B cell (primary cell): ENCODE measurements at regions of chr2 and their contacts with region 1.

Region 1: DNA sequence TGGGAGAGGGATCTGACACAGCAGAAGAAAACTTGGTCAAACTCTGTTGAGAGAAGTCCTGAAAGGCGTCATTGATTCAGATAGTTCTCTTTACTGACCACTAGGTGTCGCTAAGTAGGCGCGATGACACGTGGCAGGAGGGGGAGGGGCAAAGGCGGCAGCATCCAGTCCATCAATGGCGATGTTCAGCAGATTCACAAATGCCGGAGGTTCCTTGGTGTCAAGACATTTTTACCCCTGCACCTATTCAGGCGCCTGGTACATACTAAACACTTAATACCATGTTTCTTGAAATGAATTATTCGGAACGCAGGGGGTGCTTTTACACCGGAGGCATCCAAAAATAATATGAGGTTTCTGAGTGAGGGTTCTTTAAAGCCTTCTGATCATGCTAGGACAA is 3.0 kb upstream of the PLEK start:
- DNase-seq: peak; percentile 91
- ATAC-seq: peak; percentile 74
- H3K4me3 ChIP-seq: peak overlapping the region; percentile 14 to 68 (median 42)
- H3K4me3 Mint-ChIP-seq: peak overlapping the region; percentile 97
- H3K27ac ChIP-seq: peak overlapping the region; percentile 89 to 91
- H3K27ac Mint-ChIP-seq: peak overlapping the region; percentile 97
- H3K4me1 ChIP-seq: peaks cover 34 to 46% of the 10 kb centered on the region in 2 donors
- H3K4me1 Mint-ChIP-seq: peaks cover 54% of the 10 kb centered on the region
- H3K27me3 ChIP-seq: no peaks in the 10 kb centered on the region
- H3K27me3 Mint-ChIP-seq: no peaks in the 10 kb centered on the region
- CTCF ChIP-seq: peak; percentile 84

Region 2: DNA sequence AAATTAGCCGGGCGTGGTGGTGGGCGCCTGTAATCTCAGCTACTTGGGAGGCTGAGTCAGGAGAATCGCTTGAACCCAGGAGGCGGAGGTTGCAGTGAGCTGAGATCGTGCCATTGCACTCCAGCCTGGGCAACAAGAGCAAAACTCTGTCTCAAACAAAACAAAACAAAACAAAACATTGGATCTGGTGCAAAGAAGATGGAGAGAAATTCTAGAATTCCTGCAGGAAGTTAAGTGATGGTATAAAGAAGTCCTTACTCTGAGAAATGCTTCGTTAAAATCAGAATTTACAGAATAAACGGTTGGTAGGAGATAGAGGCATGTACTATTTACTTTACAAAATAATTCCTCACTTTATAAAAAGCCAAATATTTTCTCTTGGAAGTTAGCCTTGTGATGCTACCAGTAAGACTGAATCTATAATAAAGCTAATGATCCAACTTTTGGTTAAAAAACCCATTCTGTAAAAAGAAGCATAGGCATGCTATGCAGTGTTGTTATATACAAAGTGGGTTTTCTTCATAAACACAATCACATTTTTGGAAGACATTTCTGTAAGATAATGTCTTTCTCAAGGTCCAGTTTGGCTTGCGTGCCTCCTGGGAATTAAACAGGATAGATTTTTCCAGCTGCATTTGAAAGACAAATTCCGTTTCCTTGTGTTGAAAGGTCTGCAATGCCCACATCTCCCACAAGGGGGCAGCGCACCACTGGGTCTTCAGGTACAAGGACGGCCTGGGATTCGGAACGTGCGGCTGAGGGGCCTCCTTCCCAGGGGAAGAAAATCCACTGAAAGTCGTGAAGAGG is 240.0 kb before region 1 on chr2:
- CTCF ChIA-PET with region 1: interaction called, 3 read pairs
- POLR2A ChIA-PET with region 1: no interaction called
- intact Hi-C with region 1: loop called (anchors 1 kb)
- DNase-seq: peak; percentile 81
- ATAC-seq: peak; percentile 34
- H3K4me3 ChIP-seq: peak overlapping the region in 1 of 5 experiments; percentile 34
- H3K4me3 Mint-ChIP-seq: peak overlapping the region; percentile 50
- H3K27ac ChIP-seq: peak overlapping the region in 1 of 2 donors; percentile 88
- H3K27ac Mint-ChIP-seq: peak overlapping the region; percentile 99
- H3K4me1 ChIP-seq: peaks cover 27 to 46% of the 10 kb centered on the region in 2 donors
- H3K4me1 Mint-ChIP-seq: peaks cover 42% of the 10 kb centered on the region
- H3K27me3 ChIP-seq: no peaks in the 10 kb centered on the region
- H3K27me3 Mint-ChIP-seq: no peaks in the 10 kb centered on the region
- CTCF ChIP-seq: peak; percentile 95

Region 3: DNA sequence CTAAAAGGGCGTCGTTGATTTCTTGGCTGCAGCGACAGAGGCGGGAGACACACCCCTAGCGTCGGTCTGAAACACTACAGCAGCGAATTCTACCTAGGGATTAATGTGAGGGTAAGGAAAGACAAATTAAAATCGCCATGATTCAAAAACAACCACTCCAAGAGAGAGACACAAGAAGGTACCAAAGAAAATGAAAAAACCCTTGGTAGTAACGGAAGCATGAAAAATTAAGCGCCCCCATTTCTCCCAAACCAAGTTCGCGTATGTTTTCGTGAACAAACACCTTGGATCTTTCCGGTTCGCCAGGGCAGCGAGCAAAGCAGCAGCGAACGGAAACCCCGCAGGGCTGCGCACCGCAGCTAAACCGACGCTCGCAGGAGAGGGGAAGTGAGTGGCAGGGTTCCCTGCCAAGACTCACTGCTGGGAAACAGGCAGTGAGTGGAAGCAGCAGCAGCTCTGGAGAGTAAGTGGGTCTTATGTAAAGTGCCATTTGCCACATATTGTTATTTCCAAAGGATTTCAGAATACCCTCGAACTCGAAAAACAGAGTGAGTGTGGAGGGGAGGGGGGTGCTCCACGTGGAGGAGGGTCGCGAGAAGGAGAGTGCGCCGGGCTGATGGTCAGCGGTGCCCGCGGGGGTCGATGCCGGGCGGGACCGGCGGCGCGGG is 110.7 kb before region 1 on chr2:
- CTCF ChIA-PET with region 1: interaction called, 3 read pairs
- POLR2A ChIA-PET with region 1: no interaction called
- intact Hi-C with region 1: loop called (anchors 1 kb)
- DNase-seq: peak; percentile 92
- ATAC-seq: peak; percentile 60
- H3K4me3 ChIP-seq: peak overlapping the region; percentile 76 to 97 (median 96)
- H3K4me3 Mint-ChIP-seq: peak overlapping the region; percentile 90
- H3K27ac ChIP-seq: peak overlapping the region; percentile 86 to 92
- H3K27ac Mint-ChIP-seq: peak overlapping the region; percentile 93
- H3K4me1 ChIP-seq: peaks cover 39 to 55% of the 10 kb centered on the region in 2 donors
- H3K4me1 Mint-ChIP-seq: peaks cover 36% of the 10 kb centered on the region
- H3K27me3 ChIP-seq: no peaks in the 10 kb centered on the region
- H3K27me3 Mint-ChIP-seq: no peaks in the 10 kb centered on the region
- CTCF ChIP-seq: peak; percentile 77

Region 4: GRCh38 chr2:68385220-68385906 is 23.3 kb after region 1 on chr2:
- CTCF ChIA-PET with region 1: interaction called, 10 read pairs
- POLR2A ChIA-PET with region 1: interaction called, 8 read pairs
- intact Hi-C with region 1: loop called (anchors 1 kb)
- DNase-seq: peak; percentile 81
- ATAC-seq: peak; percentile 73
- H3K4me3 ChIP-seq: no peak overlapping the region
- H3K4me3 Mint-ChIP-seq: peak overlapping the region; percentile 58
- H3K27ac ChIP-seq: peak overlapping the region; percentile 95 to 98
- H3K27ac Mint-ChIP-seq: peak overlapping the region; percentile 92
- H3K4me1 ChIP-seq: peaks cover 75 to 84% of the 10 kb centered on the region in 2 donors
- H3K4me1 Mint-ChIP-seq: peaks cover 88% of the 10 kb centered on the region
- H3K27me3 ChIP-seq: no peaks in the 10 kb centered on the region
- H3K27me3 Mint-ChIP-seq: no peaks in the 10 kb centered on the region
- CTCF ChIP-seq: no peak

Region 5: DNA sequence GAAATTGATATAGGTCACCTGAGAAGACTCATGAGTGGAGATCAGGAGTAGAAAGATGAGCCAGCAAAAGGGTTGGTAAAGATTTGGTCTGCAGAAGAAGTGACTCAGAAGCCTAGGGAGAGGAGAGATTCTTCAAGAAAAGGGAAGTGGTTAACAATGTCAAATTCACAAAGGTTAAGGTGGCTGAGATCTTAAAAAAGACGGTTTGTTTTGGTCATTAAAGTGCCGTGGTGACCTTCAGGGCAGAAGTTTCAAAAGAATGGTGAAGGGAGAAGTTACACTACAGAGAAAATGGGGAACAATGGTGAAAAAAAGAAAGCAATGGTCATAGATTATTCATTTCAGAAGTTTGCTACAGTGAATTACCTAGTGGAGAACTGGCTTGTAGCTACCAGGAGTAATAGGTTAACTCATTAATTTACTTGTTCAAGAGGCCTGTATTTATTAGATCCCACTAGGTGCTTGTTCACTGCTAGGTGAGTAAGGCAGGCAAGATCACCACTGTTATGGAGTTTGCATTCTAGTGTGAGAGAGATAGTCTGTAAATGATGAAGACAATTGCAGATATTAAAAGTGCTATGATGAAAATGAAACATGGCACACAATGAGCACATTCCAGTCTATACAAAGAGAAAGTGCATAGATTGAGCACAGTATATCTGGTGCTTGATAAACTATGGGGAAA is 62.0 kb after region 1 on chr2:
- CTCF ChIA-PET with region 1: interaction called, 7 read pairs
- POLR2A ChIA-PET with region 1: interaction called, 4 read pairs
- intact Hi-C with region 1: loop called (anchors 1 kb)
- DNase-seq: peak; percentile 74
- ATAC-seq: peak; percentile 81
- H3K4me3 ChIP-seq: peak overlapping the region in 2 of 5 experiments; percentile 3 to 29
- H3K4me3 Mint-ChIP-seq: no peak overlapping the region
- H3K27ac ChIP-seq: peak overlapping the region; percentile 37 to 54
- H3K27ac Mint-ChIP-seq: no peak overlapping the region
- H3K4me1 ChIP-seq: peaks cover 78 to 82% of the 10 kb centered on the region in 2 donors
- H3K4me1 Mint-ChIP-seq: peaks cover 57% of the 10 kb centered on the region
- H3K27me3 ChIP-seq: no peaks in the 10 kb centered on the region
- H3K27me3 Mint-ChIP-seq: no peaks in the 10 kb centered on the region
- CTCF ChIP-seq: no peak

Region 6: DNA sequence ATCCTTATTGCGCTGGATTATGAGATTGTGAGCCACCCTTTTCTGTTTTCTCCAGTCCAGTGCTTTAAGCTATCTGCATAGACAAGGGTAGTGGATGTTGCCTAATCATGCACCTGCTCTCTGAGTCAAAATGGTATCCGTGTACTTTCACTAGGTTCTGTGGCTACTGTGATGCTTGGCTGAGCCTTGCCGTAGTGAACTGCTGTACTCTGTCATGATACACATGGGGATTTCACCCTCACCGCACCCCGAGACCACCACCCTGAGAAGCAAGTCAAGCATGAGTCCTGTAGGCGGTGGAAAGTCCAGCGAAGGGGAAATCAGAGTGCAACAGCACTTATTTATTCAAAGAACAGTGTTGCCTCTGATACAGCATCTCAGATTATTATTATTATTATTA is 427.5 kb after region 1 on chr2:
- CTCF ChIA-PET with region 1: no interaction called
- POLR2A ChIA-PET with region 1: no interaction called
- intact Hi-C with region 1: loop called (anchors 10 kb)
- DNase-seq: peak; percentile 96
- ATAC-seq: peak; percentile 89
- H3K4me3 ChIP-seq: peak overlapping the region in 1 of 5 experiments; percentile 27
- H3K4me3 Mint-ChIP-seq: peak overlapping the region; percentile 80
- H3K27ac ChIP-seq: peak overlapping the region; percentile 91 to 96
- H3K27ac Mint-ChIP-seq: peak overlapping the region; percentile 99
- H3K4me1 ChIP-seq: peaks cover 94 to 96% of the 10 kb centered on the region in 2 donors
- H3K4me1 Mint-ChIP-seq: peaks cover 55% of the 10 kb centered on the region
- H3K27me3 ChIP-seq: no peaks in the 10 kb centered on the region
- H3K27me3 Mint-ChIP-seq: no peaks in the 10 kb centered on the region
- CTCF ChIP-seq: no peak

Region 7: DNA sequence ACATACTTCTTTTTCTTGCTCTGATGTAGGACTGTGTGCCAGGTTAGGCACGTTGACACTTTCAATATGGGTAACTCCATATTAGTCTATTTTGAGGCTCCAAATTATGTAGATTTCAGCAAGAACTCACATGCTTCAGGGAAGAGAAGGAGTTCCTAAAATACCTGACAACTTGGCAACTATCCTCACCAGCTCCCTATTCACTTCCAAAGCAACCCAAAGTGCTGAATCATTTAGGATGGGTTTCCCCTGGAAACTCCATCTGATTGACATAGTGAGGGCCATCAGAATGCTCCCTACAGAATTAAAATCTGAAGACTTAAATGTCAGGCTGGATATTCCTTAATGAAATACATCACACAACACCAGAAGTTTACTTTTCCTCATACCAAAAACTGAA is 1107.7 kb after region 1 on chr2:
- CTCF ChIA-PET with region 1: no interaction called
- POLR2A ChIA-PET with region 1: no interaction called
- intact Hi-C with region 1: no loop called
- DNase-seq: no peak
- ATAC-seq: no peak
- H3K4me3 ChIP-seq: no peak overlapping the region
- H3K4me3 Mint-ChIP-seq: no peak overlapping the region
- H3K27ac ChIP-seq: no peak overlapping the region
- H3K27ac Mint-ChIP-seq: no peak overlapping the region
- H3K4me1 ChIP-seq: no peaks in the 10 kb centered on the region
- H3K4me1 Mint-ChIP-seq: no peaks in the 10 kb centered on the region
- H3K27me3 ChIP-seq: no peaks in the 10 kb centered on the region
- H3K27me3 Mint-ChIP-seq: peaks cover 15% of the 10 kb centered on the region
- CTCF ChIP-seq: no peak